Dendritic cell treated with granulocyte-macrophage colony-stimulating factor and Interleukin-4, amounts not matched to agents 40 ng/mL and 50 ng/mL, for 4 days (primary cell): ENCODE measurements at regions of chr1 and their contacts with region 1.

Region 1: DNA sequence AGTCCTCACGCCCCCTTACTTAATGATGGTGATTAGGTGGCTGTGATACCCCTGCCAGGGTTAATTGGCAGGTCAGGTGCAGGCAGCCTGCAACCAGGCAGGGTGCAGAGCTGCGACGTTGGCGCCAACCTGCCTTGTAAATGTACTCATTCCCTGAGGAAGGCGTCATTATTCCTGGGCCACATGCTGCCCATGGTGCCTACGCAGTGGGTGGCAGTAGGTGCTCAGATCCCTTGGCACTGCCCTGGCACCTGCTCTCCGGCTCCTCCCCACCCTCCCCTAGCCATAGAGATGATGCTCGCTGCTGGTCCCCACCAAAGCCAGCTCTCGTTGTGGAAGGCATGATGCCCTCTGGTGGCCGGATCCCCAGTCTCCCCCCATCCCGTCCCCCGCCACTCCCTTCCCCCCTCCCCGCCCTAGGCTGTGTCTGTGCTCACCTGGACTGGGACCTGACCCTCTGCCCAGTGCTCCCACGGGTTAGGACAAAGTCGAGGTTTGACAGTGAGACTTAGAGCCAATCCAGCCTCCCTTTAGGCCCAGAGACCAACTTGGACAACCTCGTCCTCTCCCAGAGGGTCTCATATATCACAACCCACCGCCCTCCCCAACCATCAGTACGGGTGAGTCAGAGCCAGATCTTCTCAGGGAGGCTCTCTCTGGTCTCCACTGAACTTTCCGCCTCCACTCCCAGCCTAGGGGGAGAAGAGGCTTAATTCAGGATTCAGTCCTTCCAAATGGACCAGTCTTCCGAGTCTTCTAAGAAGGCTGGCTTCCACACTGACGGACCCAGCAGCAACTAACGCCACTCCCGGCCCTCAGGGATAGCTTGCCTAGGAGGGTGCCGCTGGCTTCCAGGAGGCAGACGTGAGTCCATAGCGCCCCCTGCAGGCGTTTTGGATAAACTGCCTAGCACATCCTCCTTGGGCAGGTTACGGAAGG is 5.7 kb downstream of the KRTCAP2 start:
- H3K4me3 Mint-ChIP-seq: peak overlapping the region; percentile 17
- H3K27ac Mint-ChIP-seq: peak overlapping the region; percentile 26
- H3K4me1 Mint-ChIP-seq: peaks cover 25% of the 10 kb centered on the region
- H3K27me3 Mint-ChIP-seq: peaks cover 26% of the 10 kb centered on the region

Region 2: DNA sequence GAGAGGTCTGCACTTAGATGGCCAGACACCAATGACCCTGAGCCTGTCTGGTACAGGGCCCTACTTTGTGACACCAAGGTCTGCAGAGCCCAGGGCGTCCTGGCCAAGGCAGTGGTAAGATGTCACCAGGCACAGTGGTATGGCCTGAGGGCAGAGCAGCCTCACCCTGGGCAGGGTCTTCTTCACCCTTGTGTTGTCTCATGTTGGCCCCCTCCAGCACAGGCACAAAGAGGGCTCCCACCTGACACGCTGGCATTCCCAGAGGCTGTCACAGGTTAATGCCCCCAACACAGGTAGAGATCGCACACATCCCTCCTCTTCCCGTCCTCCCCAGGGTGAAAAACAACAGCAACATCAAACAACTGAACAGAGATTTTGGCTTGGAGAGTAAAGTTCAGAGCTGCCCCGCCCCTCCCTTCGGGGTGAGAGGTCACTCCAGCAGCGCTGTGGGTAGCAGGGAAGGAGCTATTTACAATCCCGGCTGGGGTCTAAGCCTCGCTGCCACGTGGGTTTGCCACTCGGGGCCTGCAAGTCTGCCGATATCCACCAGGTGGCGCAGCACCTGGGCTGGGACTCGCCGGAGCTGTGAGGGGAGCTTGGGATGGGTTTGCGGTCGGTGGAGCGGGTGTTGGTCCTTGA is 76.2 kb before region 1 on chr1:
- intact Hi-C with region 1: loop called (anchors 1 kb)
- H3K4me3 Mint-ChIP-seq: no peak overlapping the region
- H3K27ac Mint-ChIP-seq: no peak overlapping the region
- H3K4me1 Mint-ChIP-seq: peaks cover 30% of the 10 kb centered on the region
- H3K27me3 Mint-ChIP-seq: peaks cover 57% of the 10 kb centered on the region

Region 3: GRCh38 chr1:155127105-155127964 is 40.1 kb before region 1 on chr1 and contains the start of gene EFNA1:
- intact Hi-C with region 1: loop called (anchors 5 kb)
- H3K4me3 Mint-ChIP-seq: peak within 1 kb of the TSS; percentile 49
- H3K27ac Mint-ChIP-seq: peak within 1 kb of the TSS; percentile 12
- H3K4me1 Mint-ChIP-seq: peaks cover 50% of the 10 kb centered on the region
- H3K27me3 Mint-ChIP-seq: peaks cover 89% of the 10 kb centered on the region